ENCODE measurements at regions of chr15 and their contacts with region 1.

Region 1: GRCh38 chr15:48112242-48112641 is 8.5 kb upstream of the SLC24A5 start:
- DNase-seq: peak; percentile 9 to 33 (median 15)
- H3K4me3 ChIP-seq: no peak overlapping the region
- H3K27ac ChIP-seq: no peak overlapping the region
- H3K4me1 ChIP-seq: no peaks in the 10 kb centered on the region
- H3K27me3 ChIP-seq: peaks cover 0 to 14% (median 9%) of the 10 kb centered on the region in 5 experiments

Region 2: DNA sequence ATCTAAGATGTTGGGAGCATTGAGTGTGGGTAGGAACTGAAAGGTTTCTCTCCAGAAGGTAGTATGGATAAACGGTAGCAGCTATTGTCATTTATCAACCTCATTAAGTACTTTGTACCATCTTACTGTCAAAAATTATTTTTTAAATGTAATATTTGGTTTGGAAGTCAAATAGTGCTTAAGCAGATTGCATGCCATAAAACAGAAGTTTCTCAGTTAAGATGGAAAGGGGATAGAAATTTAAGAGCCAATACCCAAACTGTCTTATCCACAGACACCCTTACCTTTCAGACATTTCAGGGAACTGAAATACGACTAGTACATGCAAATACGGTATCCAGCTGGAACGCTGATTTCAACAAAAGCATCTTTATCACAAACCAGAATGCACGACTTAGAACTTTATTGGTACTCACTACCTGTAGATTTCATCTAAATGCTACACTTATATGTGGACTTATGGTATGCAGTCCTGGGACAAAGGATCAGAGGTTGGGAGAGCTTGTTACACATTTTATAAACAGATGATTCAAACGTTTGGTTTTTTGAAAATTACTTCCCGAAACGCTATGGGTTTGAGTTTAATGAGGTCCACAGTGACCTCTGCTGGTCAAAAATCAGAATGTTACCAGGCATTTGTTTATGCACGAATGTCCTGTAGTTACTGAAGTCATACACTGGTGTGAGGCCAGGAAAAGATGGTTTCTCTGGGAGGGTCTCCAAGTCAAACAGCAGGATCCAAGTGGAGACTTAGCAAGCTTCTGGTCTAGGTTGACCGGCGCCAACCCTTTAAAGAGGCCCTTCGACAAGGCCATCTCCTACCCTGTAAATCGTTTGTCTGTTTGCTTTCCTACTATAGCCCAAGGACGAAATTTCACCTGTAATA is 173.3 kb after region 1 on chr15:
- CTCF ChIA-PET with region 1: interaction called, 14 read pairs
- POLR2A ChIA-PET with region 1: no interaction called
- DNase-seq: peak; percentile 78 to 88 (median 84)
- H3K4me3 ChIP-seq: peak overlapping the region in 3 of 7 experiments; percentile 33 to 69 (median 56)
- H3K27ac ChIP-seq: no peak overlapping the region
- H3K4me1 ChIP-seq: no peaks in the 10 kb centered on the region
- H3K27me3 ChIP-seq: peaks cover 0 to 6% (median 0%) of the 10 kb centered on the region in 5 experiments

Measured in common myeloid progenitor, CD34-positive (primary cell).